ENCODE measurements at regions of chr19 and their contacts with region 1.

Region 1: DNA sequence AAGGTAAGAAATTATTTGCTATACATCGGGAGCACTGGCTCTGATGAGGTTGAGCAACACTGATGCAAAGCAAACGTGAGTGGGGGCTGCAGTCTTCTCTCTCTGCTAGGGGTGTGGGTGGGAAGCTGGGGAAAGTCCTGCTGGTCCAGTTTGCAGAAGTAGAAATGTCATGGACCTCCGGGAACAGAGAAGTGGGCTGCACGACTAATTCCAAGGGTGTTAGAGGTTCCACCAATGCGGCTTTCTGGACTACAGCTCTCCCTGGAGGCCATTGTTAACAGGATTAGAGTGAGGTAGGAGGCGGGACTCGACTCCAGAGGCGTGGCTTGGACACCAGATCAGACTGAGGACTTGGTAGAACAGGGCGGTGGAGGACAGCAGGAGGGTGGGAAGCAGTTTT is 5.7 kb upstream of the FBXO27 start:
- DNase-seq: no peak
- H3K4me3 ChIP-seq: no peak overlapping the region
- H3K27me3 ChIP-seq: no peaks in the 10 kb centered on the region
- CTCF ChIP-seq: peak; percentile 35

Region 2: DNA sequence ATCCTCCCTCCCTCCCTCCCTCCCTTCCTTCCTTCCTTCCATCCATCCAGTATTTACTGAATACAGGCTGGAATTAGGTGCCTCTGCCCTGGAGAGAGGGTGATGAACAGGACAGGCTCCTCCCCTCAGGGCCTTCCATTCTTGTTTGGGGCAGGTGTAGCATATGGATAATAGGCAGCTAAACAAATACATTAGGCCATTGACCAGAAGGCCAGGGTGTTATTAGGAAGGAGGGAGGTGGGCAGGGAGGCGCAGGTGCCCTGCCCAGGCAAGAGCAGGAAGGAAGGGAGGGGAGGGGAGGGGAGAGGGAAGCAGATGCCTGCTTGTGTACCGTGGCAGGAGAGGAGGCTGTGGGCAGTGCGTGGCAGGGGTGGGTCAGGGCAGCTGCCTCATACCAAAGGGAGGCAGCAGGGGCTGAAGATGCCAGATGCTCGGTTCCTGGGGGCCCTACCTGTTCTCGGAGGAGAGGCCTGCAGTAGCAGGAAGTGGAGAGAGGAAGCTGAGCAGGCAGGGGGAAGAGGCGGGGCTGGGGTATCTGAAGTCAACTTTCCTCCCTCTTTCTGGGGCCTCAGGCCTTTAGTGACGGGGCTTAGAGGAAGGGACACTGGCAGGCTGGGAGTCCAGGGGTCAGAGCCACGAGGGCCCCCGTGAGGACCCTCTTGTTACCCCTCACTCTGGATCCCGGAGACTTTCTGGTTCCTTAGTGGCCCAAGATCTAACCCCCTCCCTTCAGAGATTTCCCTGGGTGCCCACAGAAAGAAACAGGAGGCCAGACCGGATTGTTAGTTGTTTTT is 160.1 kb before region 1 on chr19 and contains the start of gene RINL:
- CTCF ChIA-PET with region 1: no interaction called
- POLR2A ChIA-PET with region 1: no interaction called
- DNase-seq: no peak
- H3K4me3 ChIP-seq: no peak within 1 kb of the TSS
- H3K27me3 ChIP-seq: no peaks in the 10 kb centered on the region
- CTCF ChIP-seq: no peak
- polyA plus RNA-seq, gene RINL: 1.9 TPM in 2 replicates

Region 3: DNA sequence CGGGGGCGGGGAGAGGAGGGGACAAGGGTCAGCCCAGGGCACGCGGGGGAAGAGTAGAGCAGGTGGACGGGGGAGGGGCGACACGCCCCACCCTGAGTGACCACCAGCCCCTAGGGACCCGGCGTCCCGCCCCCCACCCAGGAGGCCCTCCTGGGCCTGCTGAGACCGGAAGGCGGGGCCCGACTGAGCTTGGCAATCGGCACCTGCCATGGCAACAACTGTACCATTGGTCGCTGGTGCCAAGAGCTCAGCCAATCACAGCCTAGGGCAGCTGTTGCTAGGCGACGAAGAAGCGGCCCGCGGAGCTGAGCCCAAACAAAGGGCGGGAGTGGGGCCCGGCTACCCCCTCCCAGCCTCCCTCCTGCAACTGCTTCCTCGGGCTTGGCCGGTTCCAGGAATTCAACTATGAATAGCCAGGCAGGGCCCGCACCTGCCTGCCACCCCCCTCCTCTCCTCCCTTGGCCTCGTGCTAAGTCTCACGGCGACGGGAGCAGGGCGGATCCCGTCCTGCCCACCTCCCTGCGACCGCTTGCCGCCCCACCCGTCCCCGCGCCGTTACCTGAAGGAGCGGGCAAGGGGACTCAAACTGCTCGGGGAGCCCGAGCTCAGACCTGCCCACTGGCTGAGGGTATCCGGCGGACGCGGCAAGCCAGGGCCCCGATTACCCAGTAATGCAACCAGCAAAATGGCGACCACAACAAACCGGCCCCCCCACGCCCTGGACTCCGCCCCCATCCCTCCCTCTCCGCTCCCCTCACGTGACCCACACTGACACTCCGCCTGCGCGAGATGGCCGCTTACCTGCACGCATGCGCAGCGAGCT is 795.6 kb after region 1 on chr19 and contains the start of gene DYRK1B:
- CTCF ChIA-PET with region 1: no interaction called
- POLR2A ChIA-PET with region 1: interaction called, 26 read pairs
- DNase-seq: peak; percentile 76
- H3K4me3 ChIP-seq: peak within 1 kb of the TSS; percentile 90
- H3K27me3 ChIP-seq: no peaks in the 10 kb centered on the region
- CTCF ChIP-seq: no peak
- polyA plus RNA-seq, gene DYRK1B: 6.6 and 8.4 TPM in 2 replicates

Measured in BJ (cell line).